Calu3 (cell line): ENCODE measurements at regions of chr18 and their contacts with region 1.

Region 1: GRCh38 chr18:21330122-21330701 is 88.2 kb downstream of the GREB1L start:
- DNase-seq: peak; percentile 19
- H3K4me3 Mint-ChIP-seq: peak overlapping the region; percentile 44
- H3K27ac Mint-ChIP-seq: peak overlapping the region; percentile 67
- H3K4me1 Mint-ChIP-seq: peaks cover 35% of the 10 kb centered on the region
- H3K27me3 Mint-ChIP-seq: no peaks in the 10 kb centered on the region
- CTCF ChIP-seq: no peak

Region 2: GRCh38 chr18:21230436-21230835 is 99.8 kb before region 1 on chr18:
- CTCF ChIA-PET with region 1: no interaction called
- intact Hi-C with region 1: no loop called
- DNase-seq: no peak
- H3K4me3 Mint-ChIP-seq: no peak overlapping the region
- H3K27ac Mint-ChIP-seq: no peak overlapping the region
- H3K4me1 Mint-ChIP-seq: no peaks in the 10 kb centered on the region
- H3K27me3 Mint-ChIP-seq: no peaks in the 10 kb centered on the region
- CTCF ChIP-seq: no peak

Region 3: GRCh38 chr18:21300769-21301140 is 29.5 kb before region 1 on chr18:
- CTCF ChIA-PET with region 1: no interaction called
- intact Hi-C with region 1: no loop called
- DNase-seq: no peak
- H3K4me3 Mint-ChIP-seq: no peak overlapping the region
- H3K27ac Mint-ChIP-seq: no peak overlapping the region
- H3K4me1 Mint-ChIP-seq: no peaks in the 10 kb centered on the region
- H3K27me3 Mint-ChIP-seq: no peaks in the 10 kb centered on the region
- CTCF ChIP-seq: no peak

Region 4: GRCh38 chr18:21391074-21391673 is 61.0 kb after region 1 on chr18:
- CTCF ChIA-PET with region 1: no interaction called
- intact Hi-C with region 1: loop called (anchors 5 kb)
- DNase-seq: peak; percentile 28
- H3K4me3 Mint-ChIP-seq: no peak overlapping the region
- H3K27ac Mint-ChIP-seq: peak overlapping the region; percentile 64
- H3K4me1 Mint-ChIP-seq: peaks cover 20% of the 10 kb centered on the region
- H3K27me3 Mint-ChIP-seq: no peaks in the 10 kb centered on the region
- CTCF ChIP-seq: no peak